Vagina (tissue), 2 donors: ENCODE measurements at regions of chr3 and their contacts with region 1.

Region 1: GRCh38 chr3:94009608-94010007 is 18.8 kb downstream of the STX19 start:
- DNase-seq: no peak
- H3K4me3 ChIP-seq: no peak overlapping the region
- H3K27ac ChIP-seq: no peak overlapping the region
- H3K4me1 ChIP-seq: peaks cover 7% of the 10 kb centered on the region
- H3K27me3 ChIP-seq: no peaks in the 10 kb centered on the region
- CTCF ChIP-seq: no peak
- POLR2A ChIP-seq: no peak

Region 2: DNA sequence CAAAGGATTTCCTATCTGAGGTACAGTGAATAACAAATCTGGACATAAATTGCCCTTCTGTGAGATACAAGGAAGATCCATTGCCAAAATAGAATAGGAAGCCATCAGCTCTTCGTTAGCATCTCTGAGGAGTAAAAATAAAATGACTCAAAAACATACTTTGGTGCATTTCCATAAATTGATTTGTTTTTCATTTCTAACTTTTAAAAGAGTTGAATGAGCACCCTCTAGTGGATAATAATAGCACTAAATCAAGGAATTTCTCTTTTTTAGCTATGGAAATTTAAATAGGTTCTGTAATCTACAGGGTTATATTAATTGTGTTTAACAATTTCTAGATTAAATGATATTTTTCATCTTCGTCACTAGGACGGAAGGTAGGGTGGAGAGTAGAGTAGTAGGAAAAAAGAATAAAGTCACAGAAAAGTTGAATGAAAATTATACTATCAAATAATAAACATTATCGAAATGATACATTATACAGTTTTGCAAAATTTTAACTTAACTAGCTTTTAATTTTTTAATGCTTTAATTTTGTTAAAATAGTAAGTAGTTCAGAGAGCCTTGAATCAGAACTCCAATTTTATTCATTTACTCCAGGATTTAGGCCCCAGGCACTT is 59.7 kb after region 1 on chr3:
- intact Hi-C with region 1: loop called (anchors 5 kb)
- DNase-seq: no peak
- H3K4me3 ChIP-seq: no peak overlapping the region
- H3K27ac ChIP-seq: no peak overlapping the region
- H3K4me1 ChIP-seq: peaks cover 18% of the 10 kb centered on the region
- H3K27me3 ChIP-seq: no peaks in the 10 kb centered on the region
- CTCF ChIP-seq: peak; percentile 14 to 44 (median 44)
- POLR2A ChIP-seq: no peak

Region 3: GRCh38 chr3:94303897-94304296 is 294.3 kb after region 1 on chr3:
- intact Hi-C with region 1: no loop called
- DNase-seq: no peak
- H3K4me3 ChIP-seq: no peak overlapping the region
- H3K27ac ChIP-seq: no peak overlapping the region
- H3K4me1 ChIP-seq: peaks cover 8% of the 10 kb centered on the region
- H3K27me3 ChIP-seq: no peaks in the 10 kb centered on the region
- CTCF ChIP-seq: no peak
- POLR2A ChIP-seq: no peak

Region 4: GRCh38 chr3:95738045-95738444 is 1728.4 kb after region 1 on chr3:
- intact Hi-C with region 1: no loop called
- DNase-seq: no peak
- H3K4me3 ChIP-seq: no peak overlapping the region
- H3K27ac ChIP-seq: no peak overlapping the region
- H3K4me1 ChIP-seq: no peaks in the 10 kb centered on the region
- H3K27me3 ChIP-seq: no peaks in the 10 kb centered on the region
- CTCF ChIP-seq: no peak
- POLR2A ChIP-seq: no peak